ENCODE measurements at regions of chr12 and their contacts with region 1.

Region 1: GRCh38 chr12:121773011-121773777 is 20.3 kb downstream of the RHOF start:
- DNase-seq: peak in 1 of 2 experiments; percentile 89
- H3K4me3 ChIP-seq: no peak overlapping the region
- H3K27ac ChIP-seq: no peak overlapping the region
- H3K4me1 ChIP-seq: peaks cover 0 to 18% (median 14%) of the 10 kb centered on the region in 4 experiments; a peak in 6 of 7 replicates
- H3K27me3 ChIP-seq: no peaks in the 10 kb centered on the region
- CTCF ChIP-seq: peak; percentile 95 to 98 (median 96)
- EP300 ChIP-seq: no peak
- POLR2A ChIP-seq: no peak
- RAD21 ChIP-seq: peak; percentile 91 to 95

Region 2: GRCh38 chr12:121697098-121697698 is 76.0 kb before region 1 on chr12:
- CTCF ChIA-PET with region 1: interaction called, 30 read pairs
- POLR2A ChIA-PET with region 1: interaction called, 3 read pairs
- DNase-seq: no peak
- H3K4me3 ChIP-seq: no peak overlapping the region
- H3K27ac ChIP-seq: no peak overlapping the region
- H3K4me1 ChIP-seq: no peaks in the 10 kb centered on the region
- H3K27me3 ChIP-seq: no peaks in the 10 kb centered on the region
- CTCF ChIP-seq: peak in 2 of 3 experiments; percentile 12 to 31; a peak in 2 of 4 replicates
- EP300 ChIP-seq: no peak
- POLR2A ChIP-seq: no peak
- RAD21 ChIP-seq: peak; percentile 57

Region 3: DNA sequence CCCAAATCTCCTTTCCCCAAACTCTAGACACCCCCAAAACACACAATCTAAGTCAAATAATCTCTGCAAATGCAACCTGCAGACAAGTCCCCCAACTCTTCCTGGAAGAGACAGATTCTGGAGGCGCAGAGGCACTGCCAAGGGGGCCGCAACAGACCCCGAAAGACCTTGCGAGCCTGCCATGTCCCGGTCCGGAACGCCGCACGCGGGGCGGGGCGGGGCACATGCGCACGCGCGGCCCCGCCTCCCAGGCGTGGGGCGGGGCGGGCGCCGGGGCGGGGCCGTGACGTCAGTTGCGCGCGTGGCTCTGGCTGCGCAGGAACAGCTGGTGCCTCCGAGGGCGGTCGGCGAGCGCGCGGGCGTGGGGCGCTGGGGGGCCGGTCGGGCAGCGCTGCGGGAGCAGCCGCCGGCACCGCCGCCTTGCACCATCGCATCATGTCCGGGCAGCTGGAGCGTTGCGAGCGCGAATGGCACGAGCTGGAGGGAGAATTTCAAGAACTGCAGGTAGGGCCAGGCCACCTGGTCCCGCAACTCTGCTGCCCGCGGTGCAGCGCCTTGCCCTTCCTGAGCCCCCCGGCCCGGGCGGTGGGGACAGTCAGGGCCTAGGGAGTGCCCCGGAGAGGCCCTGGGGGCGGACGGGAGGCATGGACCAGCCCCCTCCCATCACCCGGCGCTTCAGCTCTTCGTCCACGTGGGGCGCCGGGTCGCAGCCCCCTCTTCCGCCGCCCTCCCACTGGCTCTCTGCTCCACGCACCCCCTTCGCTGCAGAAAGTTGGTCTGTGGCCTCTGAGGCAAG is 60.5 kb before region 1 on chr12 and contains the start of gene TMEM120B:
- CTCF ChIA-PET with region 1: interaction called, 69 read pairs
- POLR2A ChIA-PET with region 1: interaction called, 4 read pairs
- DNase-seq: peak in 1 of 2 experiments; percentile 88
- H3K4me3 ChIP-seq: peak within 1 kb of the TSS; percentile 79 to 91 (median 87)
- H3K27ac ChIP-seq: no peak within 1 kb of the TSS
- H3K4me1 ChIP-seq: peaks cover 0 to 14% (median 4%) of the 10 kb centered on the region in 4 experiments; a peak in 5 of 7 replicates
- H3K27me3 ChIP-seq: no peaks in the 10 kb centered on the region
- CTCF ChIP-seq: peak in 2 of 3 experiments; percentile 26 to 32; a peak in 2 of 4 replicates
- EP300 ChIP-seq: no peak
- POLR2A ChIP-seq: peak in 1 of 2 experiments; percentile 52; a peak in 1 of 3 replicates
- RAD21 ChIP-seq: no peak
- total RNA-seq, gene TMEM120B: 26.0 and 29.1 TPM in 2 replicates

Region 4: DNA sequence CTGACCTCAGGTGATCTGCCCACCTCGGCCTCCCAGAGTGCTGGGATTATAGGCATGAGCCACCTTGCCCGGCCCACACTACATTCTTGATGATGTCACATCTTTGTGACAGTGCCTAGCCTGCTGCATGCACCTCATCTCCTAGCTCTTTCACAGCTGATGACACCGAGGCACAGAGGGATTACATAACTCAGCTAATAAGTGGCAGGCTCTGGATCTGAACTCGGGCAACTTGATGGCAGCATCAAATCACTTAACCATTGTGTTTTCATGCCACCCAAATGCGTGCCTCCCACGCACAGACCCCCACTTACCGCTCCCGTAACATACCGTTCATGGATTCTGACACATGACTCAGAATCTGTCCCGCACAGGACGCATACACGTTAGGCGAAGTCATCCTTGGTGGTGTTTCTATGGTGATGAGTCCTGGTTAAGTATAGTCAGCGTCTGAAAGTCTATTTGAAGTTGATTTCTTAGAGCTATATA is 53.2 kb before region 1 on chr12:
- CTCF ChIA-PET with region 1: interaction called, 69 read pairs
- POLR2A ChIA-PET with region 1: interaction called, 4 read pairs
- DNase-seq: no peak
- H3K4me3 ChIP-seq: no peak overlapping the region
- H3K27ac ChIP-seq: no peak overlapping the region
- H3K4me1 ChIP-seq: peaks cover 0 to 4% (median 0%) of the 10 kb centered on the region in 4 experiments; a peak in 1 of 7 replicates
- H3K27me3 ChIP-seq: no peaks in the 10 kb centered on the region
- CTCF ChIP-seq: no peak
- EP300 ChIP-seq: no peak
- POLR2A ChIP-seq: no peak
- RAD21 ChIP-seq: no peak

Region 5: DNA sequence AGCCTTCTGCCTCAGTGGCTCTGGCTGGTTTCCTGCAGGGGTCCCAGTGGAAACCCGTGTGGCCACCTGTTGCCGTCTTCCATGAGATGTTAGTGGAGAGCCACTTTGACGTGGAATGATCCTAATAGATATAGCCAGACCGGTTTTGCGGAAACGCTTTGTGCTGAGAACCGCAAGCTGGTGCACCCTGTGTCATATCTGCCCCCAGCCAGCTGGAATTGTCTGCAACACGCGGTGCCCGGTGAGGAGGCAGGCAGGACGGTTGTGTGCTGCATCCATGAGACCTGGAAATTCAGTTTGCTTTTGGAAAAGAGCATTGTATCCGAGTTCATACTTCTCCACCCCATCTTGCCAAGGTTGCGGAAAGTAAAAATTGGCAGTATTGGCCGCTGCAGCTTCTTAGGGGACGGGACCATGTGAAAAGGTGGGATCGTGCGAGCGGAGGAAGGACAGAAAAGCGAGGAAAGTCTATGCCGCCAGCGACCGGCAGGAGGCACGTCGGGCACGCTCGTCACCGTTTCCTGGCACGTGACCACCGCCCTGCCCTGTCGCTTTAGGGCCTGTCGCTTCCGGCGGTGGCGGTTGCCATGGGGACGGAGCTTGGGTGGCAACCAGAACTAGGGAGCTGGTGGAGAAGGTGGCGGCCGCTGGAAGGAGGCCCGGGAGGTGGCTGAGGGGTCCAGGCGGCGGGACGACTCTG is 144.9 kb after region 1 on chr12 and contains the start of gene CFAP251:
- CTCF ChIA-PET with region 1: no interaction called
- POLR2A ChIA-PET with region 1: no interaction called
- DNase-seq: peak; percentile 88 to 97
- H3K4me3 ChIP-seq: peak within 1 kb of the TSS; percentile 26 to 66 (median 53)
- H3K27ac ChIP-seq: no peak within 1 kb of the TSS
- H3K4me1 ChIP-seq: peaks cover 0 to 7% (median 2%) of the 10 kb centered on the region in 4 experiments; a peak in 4 of 7 replicates
- H3K27me3 ChIP-seq: no peaks in the 10 kb centered on the region
- CTCF ChIP-seq: peak; percentile 78 to 96 (median 95)
- EP300 ChIP-seq: peak in 1 of 2 experiments; percentile 8; a peak in 1 of 3 replicates
- POLR2A ChIP-seq: no peak
- RAD21 ChIP-seq: peak; percentile 79 to 83
- total RNA-seq, gene CFAP251: 2.9 and 3.3 TPM in 2 replicates

Region 6: GRCh38 chr12:121964813-121965643 is 191.8 kb after region 1 on chr12:
- CTCF ChIA-PET with region 1: no interaction called
- POLR2A ChIA-PET with region 1: no interaction called
- DNase-seq: no peak
- H3K4me3 ChIP-seq: no peak overlapping the region
- H3K27ac ChIP-seq: no peak overlapping the region
- H3K4me1 ChIP-seq: peaks cover 0 to 2% (median 0%) of the 10 kb centered on the region in 4 experiments; a peak in 1 of 7 replicates
- H3K27me3 ChIP-seq: no peaks in the 10 kb centered on the region
- CTCF ChIP-seq: no peak
- EP300 ChIP-seq: no peak
- POLR2A ChIP-seq: no peak
- RAD21 ChIP-seq: no peak

Measured in H1 (cell line).